A673 (cell line): ENCODE measurements at regions of chr6 and their contacts with region 1.

Region 1: DNA sequence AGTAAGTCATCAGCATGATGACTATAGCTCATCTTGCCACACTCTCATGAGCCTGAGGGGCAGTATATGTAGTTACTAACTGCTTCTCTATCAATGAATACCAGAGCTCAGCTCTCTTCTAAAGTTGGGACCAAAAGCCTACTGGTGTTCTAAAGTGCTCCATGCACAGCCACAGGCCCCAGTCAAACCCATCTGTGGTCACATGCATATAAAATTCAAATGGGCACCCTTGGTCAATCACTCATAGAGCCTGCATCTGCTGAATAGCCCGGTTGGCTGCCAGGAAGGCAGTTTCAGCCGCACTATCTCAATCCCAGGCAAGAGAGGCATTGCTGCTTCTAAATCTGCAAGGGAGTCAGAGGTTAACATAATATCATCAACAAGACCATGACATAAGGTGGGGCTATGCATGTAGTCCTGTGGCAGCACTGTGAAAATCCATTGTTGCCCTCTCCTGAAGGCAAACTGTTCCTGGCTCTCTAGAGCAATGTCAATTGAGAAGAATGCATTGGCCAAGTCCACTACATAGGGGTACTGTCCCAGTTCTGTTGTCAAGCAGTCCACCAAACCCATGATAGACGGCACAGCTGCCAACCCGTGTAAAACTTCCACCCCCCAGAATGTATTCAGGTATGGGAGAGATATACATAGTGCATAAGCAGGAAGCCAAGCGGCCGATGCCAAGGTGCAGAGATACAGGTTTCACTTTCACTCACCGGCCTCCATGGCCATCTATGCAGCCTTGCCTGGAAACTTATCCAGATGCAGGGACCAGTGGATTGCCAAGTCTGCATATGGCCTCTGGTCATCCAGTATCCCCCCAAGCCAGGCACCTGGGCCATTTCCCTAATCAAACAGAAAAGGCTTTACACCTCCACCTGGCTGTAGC is 76.2 kb downstream of the ALDH8A1 start:
- DNase-seq: no peak
- H3K4me3 ChIP-seq: no peak overlapping the region
- H3K27ac ChIP-seq: no peak overlapping the region
- H3K4me1 ChIP-seq: no peaks in the 10 kb centered on the region
- H3K27me3 ChIP-seq: no peaks in the 10 kb centered on the region
- CTCF ChIP-seq: no peak

Region 2: DNA sequence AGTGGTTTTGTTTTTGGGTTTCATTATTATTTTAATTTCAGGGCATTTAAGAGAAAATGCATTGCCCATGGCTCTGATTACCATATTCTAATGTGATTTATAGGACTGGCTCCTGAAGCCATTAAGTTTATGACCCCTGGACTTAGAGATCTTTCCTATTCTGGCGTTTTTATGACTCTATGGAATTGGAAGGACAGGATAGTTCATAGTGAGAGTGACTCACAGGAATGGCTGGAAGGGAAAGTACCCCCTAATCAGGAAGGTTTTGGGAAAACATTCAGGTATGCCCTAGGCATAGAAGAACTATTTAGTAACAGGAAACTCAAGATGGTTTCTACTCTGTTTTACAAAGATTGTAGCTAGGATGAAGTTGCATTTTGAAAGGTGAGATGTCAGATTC is 712.7 kb before region 1 on chr6:
- CTCF ChIA-PET with region 1: no interaction called
- POLR2A ChIA-PET with region 1: no interaction called
- intact Hi-C with region 1: loop called (anchors 1 kb)
- DNase-seq: no peak
- H3K4me3 ChIP-seq: no peak overlapping the region
- H3K27ac ChIP-seq: no peak overlapping the region
- H3K4me1 ChIP-seq: no peaks in the 10 kb centered on the region
- H3K27me3 ChIP-seq: no peaks in the 10 kb centered on the region
- CTCF ChIP-seq: no peak

Region 3: DNA sequence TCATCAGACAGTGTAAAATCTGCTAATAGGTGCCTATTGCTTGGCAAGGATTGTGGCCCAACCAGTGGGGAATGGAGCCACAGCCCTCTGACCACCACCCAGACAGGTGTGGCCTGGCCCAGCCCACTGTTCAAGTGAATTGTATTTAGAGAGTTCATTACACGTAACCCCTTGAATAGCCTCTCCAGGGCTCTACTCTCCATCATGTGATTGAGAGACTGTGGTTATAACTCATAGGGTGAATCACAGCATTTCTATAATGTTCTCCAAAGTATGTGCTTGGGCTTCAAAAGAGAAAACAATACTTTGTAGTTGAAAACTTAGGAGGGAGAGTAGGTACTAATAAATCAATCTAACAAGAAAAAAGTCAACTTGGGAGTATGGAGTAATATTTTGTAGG is 37.8 kb after region 1 on chr6:
- CTCF ChIA-PET with region 1: no interaction called
- POLR2A ChIA-PET with region 1: interaction called, 11 read pairs
- intact Hi-C with region 1: no loop called
- DNase-seq: no peak
- H3K4me3 ChIP-seq: no peak overlapping the region
- H3K27ac ChIP-seq: no peak overlapping the region
- H3K4me1 ChIP-seq: no peaks in the 10 kb centered on the region
- H3K27me3 ChIP-seq: no peaks in the 10 kb centered on the region
- CTCF ChIP-seq: no peak